Activated B cell treated with CpG ODN at 0.5 μM for 24 hours (primary cell): ENCODE measurements at regions of chr3 and their contacts with region 1.

Region 1: GRCh38 chr3:38164966-38165680 is at the start of gene OXSR1:
- DNase-seq: peak; percentile 95
- ATAC-seq: peak; percentile 88
- H3K4me3 Mint-ChIP-seq: peak within 1 kb of the TSS; percentile 94
- H3K27ac Mint-ChIP-seq: peak within 1 kb of the TSS; percentile 100
- H3K4me1 Mint-ChIP-seq: peaks cover 45% of the 10 kb centered on the region
- H3K27me3 Mint-ChIP-seq: no peaks in the 10 kb centered on the region
- CTCF ChIP-seq: no peak
- total RNA-seq, gene OXSR1: 34.8 and 40.2 TPM in 2 replicates

Region 2: GRCh38 chr3:37694284-37694675 is 470.8 kb before region 1 on chr3:
- CTCF ChIA-PET with region 1: no interaction called
- POLR2A ChIA-PET with region 1: no interaction called
- intact Hi-C with region 1: no loop called
- DNase-seq: no peak
- ATAC-seq: no peak
- H3K4me3 Mint-ChIP-seq: no peak overlapping the region
- H3K27ac Mint-ChIP-seq: no peak overlapping the region
- H3K4me1 Mint-ChIP-seq: no peaks in the 10 kb centered on the region
- H3K27me3 Mint-ChIP-seq: peaks cover 4% of the 10 kb centered on the region
- CTCF ChIP-seq: no peak

Region 3: GRCh38 chr3:37993820-37994638 is 171.1 kb before region 1 on chr3:
- CTCF ChIA-PET with region 1: no interaction called
- POLR2A ChIA-PET with region 1: no interaction called
- intact Hi-C with region 1: loop called (anchors 1 kb)
- DNase-seq: peak; percentile 61
- ATAC-seq: peak; percentile 51
- H3K4me3 Mint-ChIP-seq: peak overlapping the region; percentile 99
- H3K27ac Mint-ChIP-seq: peak overlapping the region; percentile 95
- H3K4me1 Mint-ChIP-seq: peaks cover 49% of the 10 kb centered on the region
- H3K27me3 Mint-ChIP-seq: no peaks in the 10 kb centered on the region
- CTCF ChIP-seq: no peak

Region 4: GRCh38 chr3:38039101-38039898 is 125.8 kb before region 1 on chr3 and contains the start of gene DLEC1:
- CTCF ChIA-PET with region 1: no interaction called
- POLR2A ChIA-PET with region 1: interaction called, 14 read pairs
- intact Hi-C with region 1: loop called (anchors 1 kb)
- DNase-seq: peak; percentile 57
- ATAC-seq: peak; percentile 74
- H3K4me3 Mint-ChIP-seq: peak within 1 kb of the TSS; percentile 86
- H3K27ac Mint-ChIP-seq: peak within 1 kb of the TSS; percentile 54
- H3K4me1 Mint-ChIP-seq: peaks cover 21% of the 10 kb centered on the region
- H3K27me3 Mint-ChIP-seq: peaks cover 5% of the 10 kb centered on the region
- CTCF ChIP-seq: no peak
- total RNA-seq, gene DLEC1: 0.10 and 0.11 TPM in 2 replicates

Region 5: GRCh38 chr3:38154033-38154494 is 11.1 kb before region 1 on chr3:
- CTCF ChIA-PET with region 1: interaction called, 5 read pairs
- POLR2A ChIA-PET with region 1: interaction called, 63 read pairs
- intact Hi-C with region 1: loop called (anchors 1 kb)
- DNase-seq: no peak
- ATAC-seq: no peak
- H3K4me3 Mint-ChIP-seq: no peak overlapping the region
- H3K27ac Mint-ChIP-seq: no peak overlapping the region
- H3K4me1 Mint-ChIP-seq: peaks cover 59% of the 10 kb centered on the region
- H3K27me3 Mint-ChIP-seq: no peaks in the 10 kb centered on the region
- CTCF ChIP-seq: no peak

Region 6: GRCh38 chr3:38186781-38187180 is 21.7 kb after region 1 on chr3:
- CTCF ChIA-PET with region 1: no interaction called
- POLR2A ChIA-PET with region 1: interaction called, 12 read pairs
- intact Hi-C with region 1: no loop called
- DNase-seq: no peak
- ATAC-seq: no peak
- H3K4me3 Mint-ChIP-seq: no peak overlapping the region
- H3K27ac Mint-ChIP-seq: no peak overlapping the region
- H3K4me1 Mint-ChIP-seq: no peaks in the 10 kb centered on the region
- H3K27me3 Mint-ChIP-seq: no peaks in the 10 kb centered on the region
- CTCF ChIP-seq: no peak

Region 7: DNA sequence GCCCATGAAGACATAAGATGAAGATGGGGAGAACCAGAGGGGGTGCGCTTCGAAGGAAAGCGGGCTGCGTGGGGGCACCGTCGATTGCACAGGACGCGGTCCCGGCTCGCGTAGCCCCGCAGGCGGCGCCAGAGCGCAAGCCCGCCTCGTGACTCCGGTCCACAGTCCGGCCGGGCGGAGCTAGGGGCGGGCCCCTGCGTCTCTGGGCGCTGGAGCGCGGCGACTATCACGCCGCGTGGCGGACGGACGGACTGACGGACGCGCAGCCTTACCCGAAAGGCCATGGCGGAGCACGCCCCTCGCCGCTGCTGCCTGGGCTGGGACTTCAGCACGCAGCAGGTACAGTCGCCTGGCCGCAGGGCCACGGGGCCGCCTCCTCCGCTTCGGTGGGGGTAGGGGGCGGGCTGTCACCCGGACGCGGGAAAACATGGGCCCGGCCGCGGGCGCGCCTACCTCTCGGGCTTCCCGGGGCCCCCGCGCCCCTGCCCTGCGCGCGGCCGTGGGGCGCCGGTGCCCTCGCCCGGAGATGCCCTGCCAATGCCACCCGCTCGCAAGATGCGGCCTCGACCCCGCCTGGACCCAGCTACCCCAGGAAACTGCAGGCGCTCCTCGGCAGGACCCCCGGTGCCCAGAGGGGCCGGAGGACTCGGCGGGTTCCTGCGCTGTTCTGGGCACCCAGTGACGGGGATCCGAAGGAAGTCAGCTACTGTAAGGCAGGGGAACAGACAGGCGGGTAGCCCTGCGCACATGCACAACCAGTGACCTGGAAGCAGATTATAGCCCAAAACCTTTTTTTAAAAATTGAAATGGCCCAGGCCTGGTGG is 181.7 kb after region 1 on chr3 and contains the start of gene XYLB:
- CTCF ChIA-PET with region 1: interaction called, 4 read pairs
- POLR2A ChIA-PET with region 1: no interaction called
- intact Hi-C with region 1: loop called (anchors 2 kb)
- DNase-seq: peak; percentile 72
- ATAC-seq: peak; percentile 97
- H3K4me3 Mint-ChIP-seq: peak within 1 kb of the TSS; percentile 81
- H3K27ac Mint-ChIP-seq: no peak within 1 kb of the TSS
- H3K4me1 Mint-ChIP-seq: peaks cover 4% of the 10 kb centered on the region
- H3K27me3 Mint-ChIP-seq: no peaks in the 10 kb centered on the region
- CTCF ChIP-seq: no peak
- total RNA-seq, gene XYLB: 1.3 and 1.8 TPM in 2 replicates

Region 8: DNA sequence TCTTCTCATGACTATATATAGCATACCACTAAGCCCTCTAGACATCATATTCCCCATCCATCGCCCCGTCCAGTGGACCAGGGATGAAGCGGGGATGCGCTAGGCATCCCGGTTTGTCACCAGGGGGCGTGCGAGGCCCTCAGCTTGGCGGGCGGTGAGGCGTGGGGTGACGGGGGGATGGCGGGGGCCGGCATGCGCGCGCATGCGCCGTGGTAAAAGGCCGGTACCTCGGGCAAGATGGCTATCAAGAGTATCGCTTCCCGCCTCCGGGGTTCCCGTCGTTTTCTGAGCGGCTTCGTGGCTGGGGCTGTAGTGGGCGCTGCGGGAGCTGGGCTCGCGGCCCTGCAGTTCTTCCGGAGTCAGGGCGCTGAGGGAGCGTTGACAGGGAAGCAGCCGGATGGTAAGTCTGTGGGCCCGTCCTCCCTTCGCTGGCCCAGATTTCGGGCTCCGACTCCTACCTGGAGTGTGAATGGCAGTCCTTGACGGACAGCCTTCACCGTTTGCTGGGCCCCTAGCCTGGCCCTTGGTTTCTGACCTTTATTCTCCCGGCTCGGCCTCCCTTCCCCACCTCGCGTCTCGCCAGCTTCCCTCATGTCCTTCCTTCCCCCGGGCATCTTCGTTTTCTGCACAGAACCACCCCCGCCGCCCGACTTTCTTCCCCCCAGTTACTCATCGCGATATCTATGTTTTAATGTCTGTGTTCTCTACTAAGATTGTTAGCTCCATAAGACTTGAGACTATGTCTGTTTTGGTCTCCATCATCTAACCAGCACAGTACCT is 331.2 kb after region 1 on chr3 and contains the start of gene EXOG:
- CTCF ChIA-PET with region 1: no interaction called
- POLR2A ChIA-PET with region 1: no interaction called
- intact Hi-C with region 1: loop called (anchors 1 kb)
- DNase-seq: peak; percentile 88
- ATAC-seq: peak; percentile 96
- H3K4me3 Mint-ChIP-seq: peak within 1 kb of the TSS; percentile 98
- H3K27ac Mint-ChIP-seq: peak within 1 kb of the TSS; percentile 88
- H3K4me1 Mint-ChIP-seq: peaks cover 8% of the 10 kb centered on the region
- H3K27me3 Mint-ChIP-seq: no peaks in the 10 kb centered on the region
- CTCF ChIP-seq: peak; percentile 97
- total RNA-seq, gene EXOG: 26.8 and 32.3 TPM in 2 replicates

Region 9: DNA sequence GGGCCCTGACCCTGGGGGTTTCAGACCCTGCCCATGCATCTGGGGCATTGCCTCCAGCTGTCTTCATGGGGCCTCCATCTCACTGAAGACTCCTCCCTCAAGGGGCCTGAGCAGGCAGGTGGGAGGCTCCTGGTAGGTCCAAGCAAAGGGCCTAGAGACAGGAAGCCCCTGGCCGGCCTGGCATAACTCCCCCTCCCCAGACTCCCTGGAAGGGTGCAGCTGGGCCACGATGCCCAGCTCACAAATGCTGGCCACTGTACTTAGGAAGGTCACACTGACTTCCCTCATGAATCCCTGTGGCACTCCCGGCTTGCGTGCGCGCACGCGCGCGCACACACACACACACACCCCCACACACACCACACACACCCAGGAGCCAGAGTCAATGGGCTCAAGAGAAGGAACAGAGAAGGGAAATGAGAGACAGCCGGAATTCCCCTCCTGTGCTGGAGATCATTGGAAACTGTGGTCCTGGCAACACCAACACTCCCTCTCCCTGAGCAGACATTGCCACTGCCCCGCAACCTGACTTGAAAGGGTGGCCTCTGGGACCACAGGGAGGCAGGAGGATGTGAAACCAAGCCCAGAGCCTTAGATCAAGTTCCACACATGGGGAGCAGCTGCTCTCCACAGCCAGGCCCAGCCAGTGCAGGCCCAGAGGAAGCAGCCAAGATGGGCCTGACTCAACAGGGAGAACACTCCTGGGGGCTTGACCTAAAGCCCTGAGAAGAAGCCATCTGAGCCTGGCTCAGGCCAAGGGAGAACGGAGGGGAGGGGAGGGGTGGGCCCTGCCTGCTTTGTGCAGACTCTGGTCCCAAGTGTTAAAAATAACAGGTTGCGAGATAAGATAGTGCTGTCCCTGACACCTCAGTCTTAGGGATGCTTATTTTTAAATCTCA is 414.7 kb after region 1 on chr3:
- CTCF ChIA-PET with region 1: no interaction called
- POLR2A ChIA-PET with region 1: no interaction called
- intact Hi-C with region 1: no loop called
- DNase-seq: peak; percentile 6
- ATAC-seq: no peak
- H3K4me3 Mint-ChIP-seq: no peak overlapping the region
- H3K27ac Mint-ChIP-seq: no peak overlapping the region
- H3K4me1 Mint-ChIP-seq: no peaks in the 10 kb centered on the region
- H3K27me3 Mint-ChIP-seq: peaks cover 5% of the 10 kb centered on the region
- CTCF ChIP-seq: no peak